Gastrocnemius medialis (tissue), 4 donors: ENCODE measurements at regions of chr1 and their contacts with region 1.

Region 1: GRCh38 chr1:27603681-27604578 is at the start of gene AHDC1:
- DNase-seq: peak; percentile 89 to 92
- ATAC-seq: peak; percentile 58 to 61
- H3K4me3 ChIP-seq: peak within 1 kb of the TSS; percentile 86 to 99 (median 91)
- H3K27ac ChIP-seq: peak within 1 kb of the TSS; percentile 97 to 100 (median 100)
- H3K4me1 ChIP-seq: peaks cover 34 to 35% of the 10 kb centered on the region in 2 donors
- H3K27me3 ChIP-seq: no peaks in the 10 kb centered on the region
- CTCF ChIP-seq: peak in 2 of 5 experiments; percentile 41 to 70
- POLR2A ChIP-seq: peak; percentile 97
- total RNA-seq, gene AHDC1: 22.2 to 57.9 (median 35.2) TPM

Region 2: GRCh38 chr1:27321813-27322577 is 281.9 kb before region 1 on chr1 and contains the start of gene TMEM222:
- in situ Hi-C with region 1: no loop called
- intact Hi-C with region 1: loop called (anchors 10 kb)
- DNase-seq: peak; percentile 95 to 96
- ATAC-seq: peak; percentile 97
- H3K4me3 ChIP-seq: peak within 1 kb of the TSS; percentile 85 to 100 (median 87)
- H3K27ac ChIP-seq: peak within 1 kb of the TSS; percentile 90 to 95 (median 92)
- H3K4me1 ChIP-seq: peaks cover 21 to 35% of the 10 kb centered on the region in 2 donors
- H3K27me3 ChIP-seq: peaks cover 17 to 19% (median 18%) of the 10 kb centered on the region in 3 donors
- CTCF ChIP-seq: peak in 4 of 5 experiments; percentile 36 to 42 (median 38)
- POLR2A ChIP-seq: peak; percentile 54 to 62
- total RNA-seq, gene TMEM222: 16.5 to 21.9 (median 17.8) TPM

Region 3: DNA sequence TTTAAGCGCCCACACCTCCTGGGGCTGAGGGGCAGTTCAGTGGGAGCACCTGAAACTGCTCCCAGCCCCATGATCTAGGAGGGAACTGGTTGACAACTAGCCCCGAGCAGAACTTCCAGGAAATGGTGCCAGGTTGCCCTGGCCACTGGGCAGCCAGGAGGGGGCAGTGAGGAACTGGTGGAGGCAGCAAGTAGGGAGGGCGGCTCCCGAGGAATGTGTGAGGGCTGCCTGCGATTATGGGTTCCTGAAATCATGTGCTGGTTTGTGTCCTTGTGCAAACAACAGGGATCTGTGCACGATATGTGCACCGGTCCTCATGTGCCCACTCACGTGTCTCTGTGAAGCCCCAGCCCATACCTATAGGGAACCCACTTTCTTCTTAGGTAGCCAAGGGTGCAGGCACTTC is 201.6 kb before region 1 on chr1:
- in situ Hi-C with region 1: loop called (anchors 5 to 10 kb)
- intact Hi-C with region 1: loop called (anchors 2 kb)
- DNase-seq: peak; percentile 57 to 83
- ATAC-seq: peak; percentile 37 to 51
- H3K4me3 ChIP-seq: no peak overlapping the region
- H3K27ac ChIP-seq: peak overlapping the region; percentile 68 to 78 (median 72)
- H3K4me1 ChIP-seq: peaks cover 50 to 57% of the 10 kb centered on the region in 2 donors
- H3K27me3 ChIP-seq: no peaks in the 10 kb centered on the region
- CTCF ChIP-seq: peak; percentile 47 to 74 (median 70)
- POLR2A ChIP-seq: no peak

Region 4: DNA sequence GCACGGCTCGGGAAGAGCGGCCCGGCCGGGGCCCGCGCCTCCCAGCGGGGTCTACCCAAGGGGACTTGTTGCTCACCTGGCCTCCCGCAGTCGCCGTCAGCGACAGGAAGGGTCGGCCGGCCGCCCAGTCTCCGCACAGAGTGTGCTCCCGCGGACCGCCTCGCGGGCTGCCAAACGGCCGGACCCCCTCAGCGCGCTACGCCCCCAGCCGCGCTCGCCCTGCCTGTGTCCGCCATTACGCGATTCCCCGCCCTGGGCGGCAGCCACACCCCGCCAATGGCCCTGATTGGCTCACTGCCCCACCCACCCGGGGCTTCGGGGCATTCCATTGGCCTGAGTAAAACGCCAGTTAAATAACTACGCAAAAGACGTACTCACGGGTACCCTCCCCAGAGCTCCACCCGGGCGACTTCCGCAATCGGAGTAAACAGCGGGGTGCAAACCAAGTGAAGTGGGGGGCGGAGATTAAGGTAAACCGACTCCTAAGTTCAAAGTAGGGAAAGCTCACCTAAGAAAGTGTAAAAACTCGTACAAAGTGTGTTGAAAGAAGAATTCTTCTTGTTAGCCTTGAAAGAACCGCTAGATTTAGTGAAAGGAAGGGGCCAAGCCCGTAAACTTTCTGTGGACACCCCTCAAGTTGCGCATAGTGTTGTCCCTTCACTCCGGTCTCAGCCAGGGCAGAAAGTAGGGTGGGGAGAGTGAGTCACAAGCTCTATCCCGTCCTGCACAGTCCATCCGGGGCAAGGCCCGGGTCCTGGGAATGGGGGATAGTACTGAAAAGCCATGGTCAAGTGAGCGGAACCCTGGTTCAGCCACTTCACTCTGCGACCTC is 113.8 kb before region 1 on chr1 and contains the start of gene WASF2:
- in situ Hi-C with region 1: no loop called
- intact Hi-C with region 1: loop called (anchors 2 kb)
- DNase-seq: peak; percentile 96
- ATAC-seq: peak; percentile 92 to 94
- H3K4me3 ChIP-seq: peak within 1 kb of the TSS; percentile 85 to 100 (median 95)
- H3K27ac ChIP-seq: peak within 1 kb of the TSS; percentile 97 to 100 (median 100)
- H3K4me1 ChIP-seq: peaks cover 30 to 46% of the 10 kb centered on the region in 2 donors
- H3K27me3 ChIP-seq: no peaks in the 10 kb centered on the region
- CTCF ChIP-seq: no peak
- POLR2A ChIP-seq: peak; percentile 90 to 93
- total RNA-seq, gene WASF2: 10.6 to 16.7 (median 13.3) TPM

Region 5: DNA sequence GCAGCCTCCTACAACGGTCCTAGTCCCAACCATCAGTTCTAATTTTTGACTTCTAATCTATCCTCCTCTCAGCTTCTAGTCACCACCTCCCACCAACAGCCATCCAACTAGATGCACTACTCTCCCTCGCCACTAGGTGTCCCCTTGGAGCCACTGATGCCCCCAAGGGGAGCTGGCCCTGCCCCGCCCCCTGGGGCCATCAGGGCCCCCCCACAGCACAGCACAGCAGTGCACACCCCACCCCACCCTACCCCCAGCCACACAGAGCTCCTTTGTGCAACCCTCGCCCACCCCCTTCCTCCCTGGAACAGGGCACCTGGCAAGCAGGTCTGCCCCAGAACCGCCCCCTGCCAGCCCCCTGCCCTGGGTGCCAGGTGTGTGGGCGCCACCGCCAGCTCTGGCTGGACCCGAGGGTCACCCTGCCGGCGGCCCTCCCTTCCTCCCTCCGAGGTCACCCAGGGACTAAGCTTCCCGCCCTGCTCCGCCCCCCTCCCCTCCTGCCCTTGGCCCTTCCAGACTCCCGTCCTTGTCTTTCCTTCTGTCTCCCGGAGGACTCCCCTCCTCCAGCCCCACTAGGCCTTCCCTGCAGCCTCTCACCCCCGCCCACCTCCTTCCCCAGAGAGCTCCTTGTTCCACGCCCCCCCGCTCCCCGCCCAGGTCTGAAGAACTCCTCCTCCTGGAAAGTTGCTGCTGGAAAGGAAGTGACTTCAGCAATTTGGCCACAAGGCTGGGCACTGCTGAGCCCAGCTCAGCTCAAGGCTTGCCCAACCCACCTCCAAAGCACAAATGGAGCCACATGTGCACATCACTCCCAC is 46.9 kb before region 1 on chr1:
- in situ Hi-C with region 1: loop called (anchors 5 to 10 kb)
- intact Hi-C with region 1: loop called (anchors 1 kb)
- DNase-seq: peak; percentile 88 to 95
- ATAC-seq: peak; percentile 81 to 82
- H3K4me3 ChIP-seq: peak overlapping the region; percentile 10 to 38 (median 29)
- H3K27ac ChIP-seq: peak overlapping the region; percentile 95 to 100 (median 98)
- H3K4me1 ChIP-seq: peaks cover 41 to 61% of the 10 kb centered on the region in 2 donors
- H3K27me3 ChIP-seq: no peaks in the 10 kb centered on the region
- CTCF ChIP-seq: peak; percentile 80 to 97 (median 96)
- POLR2A ChIP-seq: peak in 1 of 2 donors; percentile 13

Region 6: GRCh38 chr1:27630859-27631491 is 27.0 kb after region 1 on chr1:
- in situ Hi-C with region 1: no loop called
- intact Hi-C with region 1: no loop called
- DNase-seq: peak; percentile 42 to 61
- ATAC-seq: peak; percentile 68 to 71
- H3K4me3 ChIP-seq: no peak overlapping the region
- H3K27ac ChIP-seq: peak overlapping the region; percentile 68 to 84 (median 80)
- H3K4me1 ChIP-seq: peaks cover 33 to 38% of the 10 kb centered on the region in 2 donors
- H3K27me3 ChIP-seq: peaks cover 14 to 21% (median 21%) of the 10 kb centered on the region in 3 donors
- CTCF ChIP-seq: no peak
- POLR2A ChIP-seq: peak; percentile 9 to 39

Region 7: DNA sequence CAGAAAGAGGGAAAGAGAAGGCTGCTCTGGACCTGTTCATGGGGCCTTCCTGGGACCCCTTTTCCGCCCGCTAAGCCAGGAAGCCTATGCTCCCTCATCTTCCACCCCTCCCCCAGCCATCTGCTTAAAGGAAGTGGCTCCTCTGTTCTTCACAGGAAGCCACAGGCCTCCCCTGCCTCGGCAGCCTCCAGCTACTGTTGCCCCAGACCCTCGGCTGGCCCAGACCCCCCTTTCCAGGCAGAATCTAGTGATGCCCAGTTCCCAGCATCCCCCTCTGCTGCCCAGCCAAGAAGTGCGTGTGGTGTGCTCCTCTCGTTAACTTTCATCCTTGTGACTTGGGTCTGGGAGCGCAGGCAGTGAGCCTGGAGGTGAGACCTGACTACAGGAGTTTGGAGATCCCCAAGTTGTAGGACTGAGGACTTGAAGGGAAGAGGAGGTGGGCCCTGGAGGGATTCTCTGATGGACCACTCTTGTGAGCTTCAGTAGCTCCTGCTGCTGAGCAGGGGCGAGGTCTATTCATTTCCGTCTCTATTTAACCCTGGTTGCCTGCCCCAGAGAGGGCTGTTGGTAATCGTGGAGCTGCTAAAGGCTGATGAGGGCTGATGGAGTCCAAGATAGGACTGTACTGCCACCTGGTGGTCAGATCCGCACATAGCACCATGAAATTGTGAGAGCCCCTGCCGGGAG is 58.9 kb after region 1 on chr1:
- in situ Hi-C with region 1: loop called in 3 of 4 experiments (anchors 5 kb)
- intact Hi-C with region 1: loop called (anchors 1 kb)
- DNase-seq: peak; percentile 53 to 75
- ATAC-seq: peak; percentile 51 to 60
- H3K4me3 ChIP-seq: no peak overlapping the region
- H3K27ac ChIP-seq: peak overlapping the region in 3 of 4 donors; percentile 48 to 74 (median 66)
- H3K4me1 ChIP-seq: peaks cover 0 to 20% of the 10 kb centered on the region in 2 donors
- H3K27me3 ChIP-seq: no peaks in the 10 kb centered on the region
- CTCF ChIP-seq: peak; percentile 91 to 98 (median 94)
- POLR2A ChIP-seq: no peak